Naive thymus-derived CD4-positive, alpha-beta T cell (primary cell): ENCODE measurements at regions of chr17 and their contacts with region 1.

Region 1: GRCh38 chr17:78708510-78708973 is 73.5 kb downstream of the CYTH1 start:
- DNase-seq: peak; percentile 33 to 69 (median 58)
- ATAC-seq: peak; percentile 84
- H3K4me3 ChIP-seq: no peak overlapping the region
- H3K4me3 Mint-ChIP-seq: peak overlapping the region in 9 of 10 donors; percentile 30 to 80 (median 67)
- H3K27ac ChIP-seq: peak overlapping the region; percentile 56
- H3K27ac Mint-ChIP-seq: peak overlapping the region; percentile 30 to 95 (median 87)
- H3K4me1 ChIP-seq: peaks cover 35 to 39% of the 10 kb centered on the region in 2 donors
- H3K4me1 Mint-ChIP-seq: peaks cover 28 to 73% (median 64%) of the 10 kb centered on the region in 7 donors
- H3K27me3 ChIP-seq: no peaks in the 10 kb centered on the region
- H3K27me3 Mint-ChIP-seq: no peaks in the 10 kb centered on the region

Region 2: GRCh38 chr17:78442648-78443128 is 265.9 kb before region 1 on chr17:
- CTCF ChIA-PET with region 1: interaction called, 3 read pairs
- POLR2A ChIA-PET with region 1: no interaction called
- intact Hi-C with region 1: loop called in 1 of 2 experiments (anchors 1 kb)
- DNase-seq: no peak
- ATAC-seq: peak; percentile 89
- H3K4me3 ChIP-seq: no peak overlapping the region
- H3K4me3 Mint-ChIP-seq: no peak overlapping the region
- H3K27ac ChIP-seq: no peak overlapping the region
- H3K27ac Mint-ChIP-seq: no peak overlapping the region
- H3K4me1 ChIP-seq: no peaks in the 10 kb centered on the region
- H3K4me1 Mint-ChIP-seq: peaks cover 0 to 5% (median 0%) of the 10 kb centered on the region in 7 donors
- H3K27me3 ChIP-seq: no peaks in the 10 kb centered on the region
- H3K27me3 Mint-ChIP-seq: peaks cover 0 to 3% (median 0%) of the 10 kb centered on the region in 5 donors

Region 3: DNA sequence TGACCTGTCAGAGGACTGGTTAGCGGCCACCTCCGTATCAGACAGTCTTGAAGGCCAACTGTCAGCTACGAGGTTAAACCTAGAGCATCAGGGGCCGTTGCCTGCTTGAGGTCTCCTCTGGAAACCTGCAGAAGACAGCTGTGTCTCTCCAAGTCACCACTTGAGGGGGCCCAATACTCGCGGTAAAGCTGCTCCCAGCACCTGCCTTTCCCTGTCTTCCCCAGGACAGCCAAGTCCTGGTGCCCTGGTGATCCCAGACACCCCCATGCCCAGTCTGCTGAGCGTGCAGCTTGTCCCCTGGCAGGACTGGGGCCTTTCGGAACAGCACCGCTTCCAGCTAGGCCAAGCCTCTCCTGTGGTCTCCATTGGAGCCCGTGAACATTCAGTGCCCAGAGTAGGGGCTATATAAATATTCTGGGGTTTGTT is 211.4 kb before region 1 on chr17:
- CTCF ChIA-PET with region 1: interaction called, 6 read pairs
- POLR2A ChIA-PET with region 1: no interaction called
- intact Hi-C with region 1: loop called (anchors 1 kb)
- DNase-seq: peak in 8 of 9 donors; percentile 21 to 64 (median 48)
- ATAC-seq: peak; percentile 76
- H3K4me3 ChIP-seq: no peak overlapping the region
- H3K4me3 Mint-ChIP-seq: no peak overlapping the region
- H3K27ac ChIP-seq: no peak overlapping the region
- H3K27ac Mint-ChIP-seq: no peak overlapping the region
- H3K4me1 ChIP-seq: no peaks in the 10 kb centered on the region
- H3K4me1 Mint-ChIP-seq: peaks cover 0 to 2% (median 0%) of the 10 kb centered on the region in 7 donors
- H3K27me3 ChIP-seq: no peaks in the 10 kb centered on the region
- H3K27me3 Mint-ChIP-seq: peaks cover 0 to 4% (median 0%) of the 10 kb centered on the region in 5 donors

Region 4: GRCh38 chr17:78769196-78769773 is 60.7 kb after region 1 on chr17:
- CTCF ChIA-PET with region 1: interaction called, 4 read pairs
- POLR2A ChIA-PET with region 1: no interaction called
- intact Hi-C with region 1: loop called in 1 of 2 experiments (anchors 2 kb)
- DNase-seq: no peak
- ATAC-seq: peak; percentile 47
- H3K4me3 ChIP-seq: no peak overlapping the region
- H3K4me3 Mint-ChIP-seq: no peak overlapping the region
- H3K27ac ChIP-seq: peak overlapping the region; percentile 73
- H3K27ac Mint-ChIP-seq: no peak overlapping the region
- H3K4me1 ChIP-seq: peaks cover 90 to 93% of the 10 kb centered on the region in 2 donors
- H3K4me1 Mint-ChIP-seq: peaks cover 21 to 45% (median 40%) of the 10 kb centered on the region in 7 donors
- H3K27me3 ChIP-seq: no peaks in the 10 kb centered on the region
- H3K27me3 Mint-ChIP-seq: no peaks in the 10 kb centered on the region